Activated CD4-positive, alpha-beta memory T cell treated with anti-CD3 and anti-CD28 coated beads for 36 hours (primary cell): ENCODE measurements at regions of chr22 and their contacts with region 1.

Region 1: GRCh38 chr22:17785185-17786184 is 11.2 kb upstream of the BID start:
- DNase-seq: peak; percentile 79
- H3K4me3 Mint-ChIP-seq: no peak overlapping the region
- H3K27ac Mint-ChIP-seq: no peak overlapping the region
- H3K4me1 Mint-ChIP-seq: peaks cover 24% of the 10 kb centered on the region
- H3K27me3 Mint-ChIP-seq: no peaks in the 10 kb centered on the region

Region 2: GRCh38 chr22:17734187-17734586 is 51.3 kb before region 1 on chr22:
- CTCF ChIA-PET with region 1: interaction called, 145 read pairs
- POLR2A ChIA-PET with region 1: no interaction called
- intact Hi-C with region 1: no loop called
- DNase-seq: peak; percentile 65
- H3K4me3 Mint-ChIP-seq: no peak overlapping the region
- H3K27ac Mint-ChIP-seq: peak overlapping the region; percentile 19
- H3K4me1 Mint-ChIP-seq: peaks cover 15% of the 10 kb centered on the region
- H3K27me3 Mint-ChIP-seq: no peaks in the 10 kb centered on the region

Region 3: DNA sequence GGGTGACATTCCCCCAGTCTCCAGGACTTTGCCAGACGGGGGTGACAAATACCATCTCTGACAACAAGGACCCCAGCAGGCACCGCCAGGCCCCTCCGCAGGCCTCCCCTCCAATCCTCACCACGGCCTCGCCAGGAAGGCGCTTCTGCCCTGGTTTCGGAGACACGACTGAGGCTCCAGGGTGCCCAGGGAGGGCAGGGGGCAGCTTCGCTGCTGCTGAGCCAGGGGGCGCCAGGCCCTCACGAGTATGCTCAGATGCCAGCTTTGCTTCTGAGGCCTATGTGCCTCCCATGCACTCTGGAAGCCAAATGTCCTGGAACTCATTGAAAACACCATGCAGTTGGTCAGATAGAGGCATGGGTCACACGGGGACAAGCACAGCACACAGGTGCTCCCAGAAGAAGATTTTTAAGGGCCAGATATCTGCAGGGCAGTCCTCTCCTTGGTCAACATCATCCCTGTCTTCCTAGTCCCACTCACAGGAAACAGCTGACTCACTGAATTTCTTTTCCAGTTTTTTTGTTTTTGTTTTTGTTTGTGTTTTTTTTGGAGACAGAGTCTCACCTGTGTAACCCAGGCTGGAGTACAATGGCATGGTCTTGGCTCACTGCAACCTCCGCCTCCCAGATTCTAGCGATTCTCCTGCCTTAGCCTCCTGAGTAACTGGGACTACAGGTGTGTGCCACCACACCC is 31.1 kb before region 1 on chr22:
- CTCF ChIA-PET with region 1: interaction called, 32 read pairs
- POLR2A ChIA-PET with region 1: no interaction called
- intact Hi-C with region 1: no loop called
- DNase-seq: peak; percentile 56
- H3K4me3 Mint-ChIP-seq: no peak overlapping the region
- H3K27ac Mint-ChIP-seq: no peak overlapping the region
- H3K4me1 Mint-ChIP-seq: peaks cover 3% of the 10 kb centered on the region
- H3K27me3 Mint-ChIP-seq: no peaks in the 10 kb centered on the region

Region 4: GRCh38 chr22:17767233-17768065 is 18.0 kb before region 1 on chr22:
- CTCF ChIA-PET with region 1: interaction called, 19 read pairs
- POLR2A ChIA-PET with region 1: interaction called, 4 read pairs
- intact Hi-C with region 1: loop called (anchors 1 kb)
- DNase-seq: peak; percentile 82
- H3K4me3 Mint-ChIP-seq: peak overlapping the region; percentile 3
- H3K27ac Mint-ChIP-seq: peak overlapping the region; percentile 18
- H3K4me1 Mint-ChIP-seq: peaks cover 40% of the 10 kb centered on the region
- H3K27me3 Mint-ChIP-seq: peaks cover 4% of the 10 kb centered on the region

Region 5: DNA sequence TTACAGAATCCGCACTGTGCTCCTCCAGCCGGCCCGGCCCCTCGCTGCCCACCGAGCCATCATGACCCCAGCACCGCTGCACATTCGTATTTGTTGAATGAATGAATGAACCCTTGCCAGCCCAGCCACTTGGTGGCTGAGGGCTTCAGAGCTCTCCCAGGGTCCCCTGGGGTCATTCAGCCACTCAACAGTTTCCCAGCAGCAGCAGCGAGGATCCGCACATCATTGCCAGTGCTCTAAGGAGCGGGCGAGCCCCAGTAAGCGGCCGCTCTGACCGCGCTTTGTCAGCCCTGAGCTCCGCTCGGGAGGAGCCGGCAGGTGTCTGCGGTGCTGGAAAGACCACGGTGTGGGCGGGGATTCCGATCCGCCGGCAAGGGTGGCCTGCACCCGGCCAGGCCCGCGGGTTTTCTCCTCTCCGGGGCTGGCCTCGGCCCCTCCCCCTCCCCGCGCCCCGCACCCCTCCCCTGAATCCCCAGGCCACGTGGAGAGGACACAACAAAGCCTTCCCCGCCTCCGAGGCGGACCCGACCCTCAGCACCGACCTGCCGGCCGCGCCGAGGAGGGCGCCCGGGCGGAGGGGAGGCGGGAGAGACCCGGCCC is 11.8 kb before region 1 on chr22:
- CTCF ChIA-PET with region 1: interaction called, 19 read pairs
- POLR2A ChIA-PET with region 1: interaction called, 3 read pairs
- intact Hi-C with region 1: no loop called
- DNase-seq: peak; percentile 82
- H3K4me3 Mint-ChIP-seq: peak overlapping the region; percentile 76
- H3K27ac Mint-ChIP-seq: no peak overlapping the region
- H3K4me1 Mint-ChIP-seq: peaks cover 60% of the 10 kb centered on the region
- H3K27me3 Mint-ChIP-seq: peaks cover 7% of the 10 kb centered on the region

Region 6: DNA sequence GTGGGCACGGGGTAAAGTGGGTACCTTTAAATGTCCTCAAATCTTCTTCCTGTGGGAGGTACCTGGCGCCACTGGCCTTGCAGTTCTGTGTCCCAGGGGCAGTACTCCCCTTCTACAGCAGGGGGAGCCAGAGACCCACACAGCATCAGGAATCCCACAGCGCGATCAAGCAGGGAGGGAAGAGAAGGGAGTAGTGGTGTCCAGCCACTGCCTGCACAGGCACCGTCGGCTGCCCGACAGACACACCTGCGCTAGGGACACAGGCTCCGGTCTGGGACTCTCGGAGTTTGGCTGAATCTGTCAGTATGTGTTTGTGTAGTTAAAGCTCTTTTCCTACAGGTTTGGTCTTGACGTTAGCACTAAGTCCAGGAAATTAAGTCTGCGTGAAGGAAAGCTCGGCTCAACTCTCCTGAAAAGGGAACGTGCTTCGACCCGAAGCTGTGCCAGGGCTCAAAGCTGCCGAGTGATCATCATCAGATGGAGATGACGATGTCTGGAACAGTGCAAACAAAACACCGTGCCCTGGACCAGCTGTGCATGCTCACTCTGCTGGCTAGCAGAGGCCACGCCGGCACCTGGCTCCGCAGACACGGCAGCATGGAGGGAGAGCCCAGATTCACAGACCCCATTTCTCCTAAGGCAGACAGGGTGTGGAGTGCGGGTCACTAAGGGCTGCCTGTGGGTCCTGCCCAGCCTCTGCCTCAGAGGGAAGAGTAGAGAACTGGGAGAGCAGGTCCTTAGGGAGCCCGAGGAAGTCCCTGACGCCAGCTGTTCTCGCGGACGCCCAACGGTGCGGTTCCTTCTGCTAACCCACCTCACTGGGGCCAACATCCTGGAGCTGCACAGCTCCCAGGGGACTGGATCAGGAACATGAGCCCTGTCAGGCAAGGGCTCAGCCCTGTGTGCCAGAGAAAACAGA is 44.8 kb after region 1 on chr22:
- CTCF ChIA-PET with region 1: interaction called, 11 read pairs
- POLR2A ChIA-PET with region 1: no interaction called
- intact Hi-C with region 1: no loop called
- DNase-seq: peak; percentile 88
- H3K4me3 Mint-ChIP-seq: no peak overlapping the region
- H3K27ac Mint-ChIP-seq: no peak overlapping the region
- H3K4me1 Mint-ChIP-seq: no peaks in the 10 kb centered on the region
- H3K27me3 Mint-ChIP-seq: no peaks in the 10 kb centered on the region

Region 7: DNA sequence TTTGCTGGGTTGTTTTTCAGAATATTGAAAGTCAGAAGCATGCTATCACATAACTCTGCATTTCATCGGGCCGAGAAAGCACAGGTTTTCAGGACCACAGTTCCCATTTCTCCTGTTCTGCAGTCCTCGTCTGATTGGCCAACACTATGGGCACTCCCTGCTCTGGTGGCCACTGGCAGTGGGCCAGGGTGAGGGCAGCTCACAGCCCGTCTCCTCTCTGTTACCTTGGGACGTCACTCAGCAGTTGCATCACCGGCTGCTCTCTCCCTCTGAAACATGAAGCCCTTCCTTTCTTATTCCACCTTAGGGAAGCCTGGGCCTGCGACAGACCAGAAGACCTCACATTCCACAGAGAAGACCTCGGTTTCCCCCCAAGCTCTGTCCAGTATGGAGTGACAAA is 250.3 kb after region 1 on chr22:
- CTCF ChIA-PET with region 1: no interaction called
- POLR2A ChIA-PET with region 1: no interaction called
- intact Hi-C with region 1: no loop called
- DNase-seq: no peak
- H3K4me3 Mint-ChIP-seq: no peak overlapping the region
- H3K27ac Mint-ChIP-seq: no peak overlapping the region
- H3K4me1 Mint-ChIP-seq: no peaks in the 10 kb centered on the region
- H3K27me3 Mint-ChIP-seq: peaks cover 1% of the 10 kb centered on the region